Activated CD4-positive, alpha-beta T cell treated with anti-CD3 and anti-CD28 coated beads for 36 hours (primary cell): ENCODE measurements at regions of chr3 and their contacts with region 1.

Region 1: DNA sequence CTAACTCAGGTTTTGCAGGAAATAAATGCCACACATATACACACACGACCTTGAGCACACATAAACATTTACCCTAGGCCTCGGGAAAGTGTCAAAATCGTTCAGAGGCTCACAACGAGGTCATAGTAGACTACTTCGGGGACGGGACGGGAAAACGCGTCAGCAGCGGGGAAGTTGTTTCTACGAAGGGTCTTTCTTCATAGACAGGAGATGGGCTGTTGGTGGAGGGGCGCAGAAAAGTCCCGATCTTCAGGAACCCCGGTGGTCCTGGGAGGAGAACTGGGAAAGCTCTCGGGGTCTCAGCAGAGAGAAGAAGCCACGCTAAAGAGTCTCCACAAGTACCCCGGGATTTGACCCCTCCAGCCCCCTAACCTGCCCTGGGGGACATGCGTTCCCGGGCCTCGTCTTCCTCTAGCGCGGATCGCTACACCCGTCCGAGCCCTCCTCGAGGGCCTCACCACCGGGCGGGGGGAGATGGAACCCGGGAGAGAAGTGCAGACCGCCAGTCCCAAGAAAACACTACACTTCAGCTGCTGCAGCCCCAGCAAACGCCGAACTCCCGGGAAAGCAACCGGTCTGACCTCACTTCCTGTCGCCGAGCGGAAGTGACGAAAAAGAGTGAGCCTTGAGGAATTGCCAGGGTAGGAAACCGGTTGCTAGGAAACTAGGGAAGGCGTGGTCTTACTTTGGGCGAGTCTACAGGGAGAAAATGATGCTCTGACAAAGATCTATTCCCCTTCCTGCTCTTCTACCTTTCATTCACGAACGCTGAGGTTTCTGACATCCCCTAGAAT is at the start of gene PIK3R4:
- DNase-seq: peak; percentile 96
- ATAC-seq: peak; percentile 83
- H3K4me3 Mint-ChIP-seq: no peak within 1 kb of the TSS
- H3K27ac Mint-ChIP-seq: peak within 1 kb of the TSS; percentile 95
- H3K4me1 Mint-ChIP-seq: peaks cover 42% of the 10 kb centered on the region
- H3K27me3 Mint-ChIP-seq: no peaks in the 10 kb centered on the region
- total RNA-seq, gene PIK3R4: 27.3 to 32.3 TPM

Region 2: DNA sequence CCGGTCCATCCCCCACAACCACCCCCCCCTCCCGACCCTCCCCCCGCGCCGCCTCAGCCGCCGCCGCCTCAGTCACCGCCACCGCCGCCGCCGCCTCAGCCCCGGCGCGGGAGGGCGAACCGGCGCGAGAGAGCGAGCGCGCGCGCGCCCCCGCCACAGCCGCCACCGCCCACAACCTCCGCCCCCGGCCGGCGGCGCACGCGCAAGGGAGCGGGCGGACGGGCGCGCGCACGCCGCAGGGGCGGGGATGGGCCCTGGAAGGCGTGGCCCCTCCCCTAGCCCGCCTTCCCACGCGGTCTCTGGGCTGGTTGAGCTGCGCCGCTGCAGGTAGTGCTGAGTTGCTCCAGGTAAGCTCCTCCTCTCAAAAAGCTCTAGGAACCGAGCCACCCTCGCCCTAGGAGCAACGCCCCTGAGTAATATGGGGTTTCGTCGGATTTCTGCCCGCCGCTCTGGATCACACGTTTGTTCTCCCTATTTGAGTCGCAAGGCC is 852.8 kb before region 1 on chr3 and contains the start of gene TMCC1:
- CTCF ChIA-PET with region 1: no interaction called
- POLR2A ChIA-PET with region 1: no interaction called
- intact Hi-C with region 1: loop called in 1 of 2 experiments (anchors 2 kb)
- DNase-seq: peak; percentile 92
- ATAC-seq: peak; percentile 92
- H3K4me3 Mint-ChIP-seq: peak within 1 kb of the TSS; percentile 86
- H3K27ac Mint-ChIP-seq: peak within 1 kb of the TSS; percentile 85
- H3K4me1 Mint-ChIP-seq: peaks cover 36% of the 10 kb centered on the region
- H3K27me3 Mint-ChIP-seq: no peaks in the 10 kb centered on the region
- total RNA-seq, gene TMCC1: 14.8 to 17.3 TPM

Region 3: DNA sequence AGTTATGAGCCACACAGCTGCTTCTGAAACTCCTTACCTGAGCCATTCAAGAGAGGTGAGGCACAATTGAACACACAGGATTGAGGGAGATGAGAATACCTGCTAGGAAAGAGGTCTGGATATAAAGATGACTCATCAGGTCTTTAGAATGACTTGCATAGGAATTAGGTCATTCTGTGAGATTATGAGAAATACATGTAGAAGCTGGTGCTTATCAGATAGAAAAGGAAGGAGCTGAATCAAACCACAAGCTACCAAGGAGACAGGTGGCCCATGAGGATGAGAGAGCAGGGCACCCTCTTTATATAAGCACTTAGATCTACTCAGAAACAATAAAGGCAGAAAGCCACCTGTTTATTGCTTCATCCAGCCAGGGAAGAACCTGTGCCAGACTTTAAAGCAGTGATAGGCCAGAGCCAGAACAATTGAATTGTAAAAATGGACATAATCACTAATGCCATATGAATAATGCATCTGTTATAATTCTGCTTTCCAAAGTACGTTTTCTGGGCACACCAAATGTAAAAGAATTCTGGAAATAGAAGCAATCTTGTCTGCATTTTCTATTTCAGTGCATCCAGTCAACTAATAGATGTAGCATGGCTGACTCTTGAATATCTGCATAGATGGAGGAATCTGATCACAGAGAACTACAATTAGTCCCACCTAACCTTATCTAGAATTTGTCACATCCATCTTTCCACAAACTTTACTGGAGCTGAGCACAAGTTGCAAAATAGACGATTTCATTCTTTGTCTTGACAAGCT is 74.7 kb before region 1 on chr3:
- CTCF ChIA-PET with region 1: no interaction called
- POLR2A ChIA-PET with region 1: no interaction called
- intact Hi-C with region 1: no loop called
- DNase-seq: no peak
- ATAC-seq: peak; percentile 39
- H3K4me3 Mint-ChIP-seq: no peak overlapping the region
- H3K27ac Mint-ChIP-seq: no peak overlapping the region
- H3K4me1 Mint-ChIP-seq: no peaks in the 10 kb centered on the region
- H3K27me3 Mint-ChIP-seq: no peaks in the 10 kb centered on the region

Region 4: DNA sequence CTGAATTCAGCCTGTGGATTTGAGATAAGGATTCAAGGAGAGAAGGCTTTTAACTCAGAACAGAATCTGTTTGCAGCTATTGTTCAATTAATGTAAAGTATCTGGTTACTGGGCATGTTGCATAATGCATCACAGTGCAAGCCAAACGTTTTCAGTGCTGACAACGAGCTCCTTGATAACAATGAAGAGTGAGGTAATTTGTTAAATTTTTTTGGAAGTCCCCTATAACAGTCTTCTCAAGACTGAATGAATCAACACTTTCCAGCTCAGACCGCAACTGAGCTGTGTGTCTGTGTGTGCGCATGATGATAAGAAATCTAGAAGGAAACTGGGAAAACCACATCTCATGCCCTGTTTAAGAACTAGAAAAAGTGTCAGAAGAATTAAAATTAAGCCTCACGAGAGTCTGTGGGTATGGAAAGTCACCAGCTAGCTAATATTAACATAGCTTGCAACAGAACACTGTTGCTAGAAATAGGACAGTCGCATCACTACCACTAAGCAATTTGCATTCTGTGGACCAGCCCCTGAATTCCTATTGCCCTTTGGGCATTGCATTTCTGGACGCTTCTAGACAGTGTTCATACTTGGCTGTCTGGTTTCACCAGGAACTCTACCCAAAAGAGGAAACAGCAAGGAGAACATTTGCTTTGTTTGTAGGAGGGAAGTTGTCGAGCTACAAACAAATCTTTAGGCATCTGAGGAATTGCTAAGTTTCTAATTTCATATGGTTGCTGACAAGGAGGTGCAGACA is 103.8 kb after region 1 on chr3:
- CTCF ChIA-PET with region 1: interaction called, 4 read pairs
- POLR2A ChIA-PET with region 1: interaction called, 4 read pairs
- intact Hi-C with region 1: loop called in 1 of 2 experiments (anchors 1 kb)
- DNase-seq: peak; percentile 77
- ATAC-seq: peak; percentile 98
- H3K4me3 Mint-ChIP-seq: peak overlapping the region; percentile 26
- H3K27ac Mint-ChIP-seq: peak overlapping the region; percentile 26
- H3K4me1 Mint-ChIP-seq: peaks cover 21% of the 10 kb centered on the region
- H3K27me3 Mint-ChIP-seq: peaks cover 16% of the 10 kb centered on the region

Region 5: GRCh38 chr3:131381444-131382291 is 635.2 kb after region 1 on chr3 and contains the start of gene NUDT16:
- CTCF ChIA-PET with region 1: no interaction called
- POLR2A ChIA-PET with region 1: no interaction called
- intact Hi-C with region 1: loop called in 1 of 2 experiments (anchors 5 kb)
- DNase-seq: peak; percentile 98
- ATAC-seq: peak; percentile 100
- H3K4me3 Mint-ChIP-seq: peak within 1 kb of the TSS; percentile 90
- H3K27ac Mint-ChIP-seq: peak within 1 kb of the TSS; percentile 91
- H3K4me1 Mint-ChIP-seq: peaks cover 22% of the 10 kb centered on the region
- H3K27me3 Mint-ChIP-seq: no peaks in the 10 kb centered on the region
- total RNA-seq, gene NUDT16: 4.0 to 5.7 TPM

Region 6: DNA sequence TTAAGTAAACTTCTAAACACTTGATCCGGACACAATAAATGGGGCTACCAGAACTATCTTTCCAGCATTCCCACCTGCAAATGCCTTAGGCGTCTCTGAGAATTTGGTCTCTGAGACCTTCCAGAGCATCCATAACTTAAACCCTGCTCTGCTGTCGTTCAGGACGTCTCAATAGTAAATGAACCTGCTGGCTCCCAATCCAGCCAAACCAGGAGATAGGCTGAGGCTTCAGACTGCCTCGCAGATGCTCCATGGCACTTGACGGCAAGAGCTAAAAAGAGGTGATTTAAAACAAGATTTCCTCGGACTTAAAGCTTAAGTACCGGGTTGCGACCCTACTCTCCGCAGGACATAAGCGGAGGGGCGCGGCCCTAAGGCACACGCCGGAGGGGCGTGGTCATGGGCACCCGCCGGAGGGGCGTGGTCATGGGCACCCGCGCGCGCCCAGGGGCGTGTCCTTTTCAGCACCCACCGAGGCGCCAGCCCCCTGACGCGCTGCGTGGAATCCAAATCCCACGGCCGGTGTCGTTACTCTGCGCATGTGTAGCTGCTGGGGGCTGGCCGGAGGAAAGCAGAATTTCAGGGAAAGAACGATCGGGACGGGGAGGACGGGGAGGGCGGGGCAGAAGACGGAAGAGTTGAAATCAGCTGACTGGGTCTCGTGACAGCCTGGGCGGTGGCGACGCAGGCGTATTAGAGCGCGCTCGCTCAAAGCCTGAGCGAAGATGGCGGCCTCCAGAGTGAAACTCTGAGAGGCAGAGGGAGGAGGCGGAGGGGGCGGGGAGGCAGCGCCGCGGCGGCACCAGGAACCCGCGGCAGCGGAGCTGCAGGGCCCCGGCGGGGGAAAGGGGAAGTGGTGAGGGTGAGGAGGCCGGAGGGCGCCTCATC is 1670.6 kb after region 1 on chr3 and contains the start of gene DNAJC13:
- CTCF ChIA-PET with region 1: no interaction called
- POLR2A ChIA-PET with region 1: no interaction called
- intact Hi-C with region 1: loop called in 1 of 2 experiments (anchors 5 kb)
- DNase-seq: peak; percentile 95
- ATAC-seq: peak; percentile 94
- H3K4me3 Mint-ChIP-seq: peak within 1 kb of the TSS; percentile 87
- H3K27ac Mint-ChIP-seq: peak within 1 kb of the TSS; percentile 94
- H3K4me1 Mint-ChIP-seq: peaks cover 37% of the 10 kb centered on the region
- H3K27me3 Mint-ChIP-seq: no peaks in the 10 kb centered on the region
- total RNA-seq, gene DNAJC13: 29.9 to 33.5 TPM